SK-N-SH (cell line): ENCODE measurements at regions of chr11 and their contacts with region 1.

Region 1: GRCh38 chr11:127481391-127481790 is 480.8 kb upstream of the KIRREL3 start:
- DNase-seq: no peak
- H3K4me3 ChIP-seq: no peak overlapping the region
- H3K27ac ChIP-seq: no peak overlapping the region
- H3K4me1 ChIP-seq: no peaks in the 10 kb centered on the region
- H3K27me3 ChIP-seq: no peaks in the 10 kb centered on the region
- CTCF ChIP-seq: no peak
- EP300 ChIP-seq: no peak
- RAD21 ChIP-seq: no peak

Region 2: GRCh38 chr11:127470306-127470884 is 11.0 kb before region 1 on chr11:
- CTCF ChIA-PET with region 1: interaction called, 12 read pairs
- POLR2A ChIA-PET with region 1: no interaction called
- DNase-seq: peak; percentile 17
- H3K4me3 ChIP-seq: no peak overlapping the region; a peak in 1 of 4 replicates
- H3K27ac ChIP-seq: no peak overlapping the region
- H3K4me1 ChIP-seq: no peaks in the 10 kb centered on the region; a peak in 1 of 4 replicates
- H3K27me3 ChIP-seq: no peaks in the 10 kb centered on the region
- CTCF ChIP-seq: no peak; the same call in 1 of the 2 replicates
- EP300 ChIP-seq: no peak
- RAD21 ChIP-seq: peak; percentile 53

Region 3: DNA sequence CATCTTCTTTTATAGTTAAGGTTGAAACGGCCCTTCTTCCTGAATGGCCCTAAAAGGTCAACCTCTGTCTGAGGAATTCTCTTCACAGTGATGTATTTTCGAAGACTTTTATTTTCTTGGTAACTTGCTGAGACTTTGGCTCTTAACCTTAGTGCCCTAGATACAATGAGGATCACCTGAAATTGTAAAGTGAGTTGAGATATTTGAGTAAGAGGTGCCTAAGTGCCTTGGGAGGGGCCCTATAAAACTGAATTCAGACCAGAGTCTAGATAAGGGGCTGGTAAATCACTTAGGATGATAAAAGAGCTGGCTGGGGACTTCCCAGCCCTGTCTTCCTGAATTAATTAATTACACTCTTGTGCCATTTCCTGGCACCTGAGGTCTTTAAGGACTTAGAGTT is 24.7 kb after region 1 on chr11:
- CTCF ChIA-PET with region 1: no interaction called
- POLR2A ChIA-PET with region 1: no interaction called
- DNase-seq: no peak
- H3K4me3 ChIP-seq: no peak overlapping the region
- H3K27ac ChIP-seq: no peak overlapping the region
- H3K4me1 ChIP-seq: peaks cover 0 to 3% of the 10 kb centered on the region in 2 experiments; a peak in 1 of 4 replicates
- H3K27me3 ChIP-seq: no peaks in the 10 kb centered on the region
- CTCF ChIP-seq: no peak
- EP300 ChIP-seq: no peak
- RAD21 ChIP-seq: no peak